Dorsolateral prefrontal cortex (tissue), 120 donors: ENCODE measurements at regions of chr5 and their contacts with region 1.

Region 1: GRCh38 chr5:125134216-125135081 is 388.0 kb upstream of the ZNF608 start:
- DNase-seq: no peak
- H3K4me3 ChIP-seq: no peak overlapping the region
- H3K27ac ChIP-seq: no peak overlapping the region
- H3K27me3 ChIP-seq: no peaks in the 10 kb centered on the region
- CTCF ChIP-seq: no peak

Region 2: DNA sequence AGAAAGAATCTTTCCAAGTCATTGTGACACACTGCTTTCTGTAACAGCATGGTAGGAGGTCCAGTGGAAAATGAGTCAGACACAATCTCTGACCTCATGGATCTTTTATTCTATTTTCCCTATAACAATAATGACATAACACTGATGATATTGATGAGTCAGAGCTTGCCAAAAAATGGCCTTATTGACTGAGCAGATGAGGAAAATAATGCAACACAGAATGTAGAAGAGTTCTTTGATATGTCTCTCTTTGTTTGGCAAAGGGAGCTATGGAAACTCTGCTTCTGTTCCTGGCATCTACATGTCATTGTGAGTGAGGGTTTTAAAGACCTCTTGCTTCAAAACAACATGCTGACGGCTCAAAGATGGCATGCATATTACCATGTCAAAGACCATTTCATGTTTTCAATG is 55.1 kb after region 1 on chr5:
- intact Hi-C with region 1: loop called in 1 of 2 experiments (anchors 10 kb)
- DNase-seq: no peak
- H3K4me3 ChIP-seq: no peak overlapping the region
- H3K27ac ChIP-seq: no peak overlapping the region
- H3K27me3 ChIP-seq: no peaks in the 10 kb centered on the region
- CTCF ChIP-seq: no peak

Region 3: DNA sequence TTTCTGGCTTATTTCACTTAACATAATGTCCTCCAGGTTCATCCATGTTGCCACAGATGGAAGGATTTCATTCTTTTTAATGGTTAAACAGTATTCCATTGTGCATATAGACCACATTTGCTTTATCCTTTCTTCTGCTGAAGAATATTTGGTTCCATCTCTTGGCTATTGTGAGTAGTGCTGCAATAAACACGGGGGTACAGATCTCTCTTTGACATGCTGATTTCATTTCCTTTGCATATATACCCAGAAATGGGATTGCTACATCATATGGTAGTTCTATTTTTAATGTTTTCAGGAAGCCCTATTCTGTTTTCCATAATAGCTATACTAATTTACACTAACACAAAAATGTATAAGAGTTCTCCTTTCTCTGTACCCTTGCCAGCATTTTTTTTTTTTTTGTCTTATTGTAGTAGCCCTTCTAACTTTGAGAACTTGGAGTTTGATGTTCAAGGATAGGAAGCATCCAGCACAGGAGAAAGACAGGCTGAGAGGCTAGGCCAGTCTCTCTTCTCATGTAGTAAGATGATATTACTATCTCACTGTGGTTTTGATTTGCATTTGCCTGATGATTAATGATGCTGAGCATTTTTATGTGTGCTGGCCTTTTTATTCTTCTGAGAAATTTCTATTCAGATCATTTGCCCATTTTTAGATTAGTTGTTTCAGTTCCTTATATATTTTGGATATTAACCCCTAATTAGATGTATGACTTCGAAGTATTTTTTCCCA is 204.2 kb after region 1 on chr5:
- intact Hi-C with region 1: no loop called
- DNase-seq: no peak
- H3K4me3 ChIP-seq: no peak overlapping the region
- H3K27ac ChIP-seq: no peak overlapping the region
- H3K27me3 ChIP-seq: no peaks in the 10 kb centered on the region
- CTCF ChIP-seq: no peak